A549 (cell line): ENCODE measurements at regions of chr15 and their contacts with region 1.

Region 1: GRCh38 chr15:40906091-40906990 is 12.1 kb downstream of the VPS18 start:
- DNase-seq: peak in 1 of 2 experiments; percentile 64
- ATAC-seq: peak; percentile 68 to 90
- H3K4me3 ChIP-seq: peak overlapping the region; percentile 41
- H3K27ac ChIP-seq: peak overlapping the region; percentile 65 to 83
- H3K4me1 ChIP-seq: peaks cover 29% of the 10 kb centered on the region
- CTCF ChIP-seq: peak; percentile 61
- EP300 ChIP-seq: no peak
- POLR2A ChIP-seq: no peak
- RAD21 ChIP-seq: peak; percentile 52 to 65

Region 2: GRCh38 chr15:40787344-40787841 is 118.9 kb before region 1 on chr15:
- CTCF ChIA-PET with region 1: no interaction called
- POLR2A ChIA-PET with region 1: no interaction called
- DNase-seq: no peak
- ATAC-seq: no peak
- H3K4me3 ChIP-seq: no peak overlapping the region
- H3K27ac ChIP-seq: peak overlapping the region; percentile 46 to 77; a peak in 4 of 6 replicates
- H3K4me1 ChIP-seq: peaks cover 36% of the 10 kb centered on the region
- CTCF ChIP-seq: no peak
- EP300 ChIP-seq: peak in 1 of 2 experiments; percentile 42; a peak in 1 of 5 replicates
- POLR2A ChIP-seq: no peak
- RAD21 ChIP-seq: no peak

Region 3: DNA sequence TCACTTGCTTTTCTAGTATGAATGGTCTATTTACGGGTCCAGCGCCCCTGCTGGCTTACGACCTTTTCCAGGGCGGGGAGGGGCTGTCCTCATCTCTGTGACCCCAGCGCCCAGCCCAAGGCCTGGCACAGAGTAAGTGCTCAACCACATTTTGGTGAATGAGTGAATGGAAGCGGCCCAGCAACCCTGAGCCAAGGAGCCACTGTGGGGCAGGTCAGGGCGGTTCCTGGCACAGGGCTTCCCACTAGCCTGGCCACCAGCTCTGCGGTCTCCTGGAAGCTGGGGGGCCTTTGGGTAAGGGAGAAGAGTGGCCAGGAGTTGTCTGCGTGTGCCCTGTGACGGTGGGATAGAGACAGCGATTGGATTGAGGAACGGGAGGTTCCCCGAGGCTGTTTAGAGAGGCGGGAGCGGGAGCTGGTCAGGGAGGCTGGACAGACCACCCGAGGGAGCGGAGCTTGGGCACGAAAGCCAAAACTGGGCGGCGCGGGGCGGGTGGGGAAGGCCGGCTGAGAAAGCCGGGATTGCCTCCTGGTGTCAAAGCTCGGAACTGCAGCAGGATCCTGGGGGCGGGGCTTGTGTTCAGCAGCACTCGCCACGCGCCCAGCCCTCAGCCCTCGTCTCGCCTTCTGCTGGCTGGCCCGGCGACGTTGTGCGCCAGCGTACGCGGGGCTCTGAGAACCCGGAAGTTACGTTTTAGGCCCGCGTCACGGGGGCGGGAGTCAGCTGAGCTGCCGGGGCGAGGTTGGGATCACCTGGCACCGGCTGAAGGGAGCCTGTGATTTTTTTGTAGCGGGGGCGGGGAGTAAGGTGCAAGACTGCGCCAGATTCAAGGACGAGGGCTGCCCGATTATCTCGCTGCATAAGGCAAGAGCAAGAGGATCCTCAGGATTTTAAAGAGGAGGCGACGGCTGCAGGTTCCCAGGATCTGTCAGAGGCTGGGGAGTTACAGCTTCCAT is 12.3 kb before region 1 on chr15 and contains the start of gene VPS18:
- CTCF ChIA-PET with region 1: interaction called, 50 read pairs
- POLR2A ChIA-PET with region 1: no interaction called
- DNase-seq: peak; percentile 72 to 95
- ATAC-seq: peak; percentile 95 to 96
- H3K4me3 ChIP-seq: peak within 1 kb of the TSS; percentile 79
- H3K27ac ChIP-seq: peak within 1 kb of the TSS; percentile 88 to 91
- H3K4me1 ChIP-seq: peaks cover 12% of the 10 kb centered on the region
- CTCF ChIP-seq: peak; percentile 68
- EP300 ChIP-seq: no peak
- POLR2A ChIP-seq: peak; percentile 47
- RAD21 ChIP-seq: peak; percentile 75 to 92
- polyA plus RNA-seq, gene VPS18: 9.0 and 10.7 TPM in 2 replicates

Region 4: DNA sequence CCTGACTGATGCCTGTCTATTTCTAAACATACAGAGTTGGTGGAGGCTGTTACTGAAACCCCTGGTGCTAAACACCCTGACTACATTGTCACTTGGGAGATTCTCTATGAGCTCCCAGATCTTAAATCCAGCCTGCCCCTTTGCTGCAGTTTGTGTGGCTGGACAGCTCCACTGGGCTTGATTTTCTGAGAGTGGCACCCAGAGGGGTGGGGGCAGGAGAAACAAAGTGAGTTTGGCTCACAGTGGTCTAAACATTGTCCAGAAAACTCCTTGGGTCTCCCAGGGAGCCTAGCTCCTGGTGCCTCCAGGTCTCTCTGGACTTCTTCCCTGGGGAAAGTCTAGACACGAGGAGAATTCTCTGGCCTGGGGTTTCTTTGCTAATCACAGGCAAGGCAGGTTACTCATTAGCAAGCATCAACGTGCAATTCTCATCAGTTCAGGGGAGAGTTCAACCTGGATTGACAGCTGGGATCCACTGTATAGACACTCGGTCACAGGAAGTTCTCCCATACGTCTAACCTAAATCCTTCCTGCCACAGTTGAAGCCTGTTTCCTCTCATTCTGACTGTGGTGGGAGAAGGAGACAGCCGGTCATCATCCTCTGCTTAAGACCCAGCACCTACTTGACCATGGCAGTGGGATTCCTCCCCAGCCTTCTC is 15.7 kb after region 1 on chr15:
- CTCF ChIA-PET with region 1: interaction called, 44 read pairs
- POLR2A ChIA-PET with region 1: no interaction called
- DNase-seq: no peak
- ATAC-seq: no peak
- H3K4me3 ChIP-seq: no peak overlapping the region
- H3K27ac ChIP-seq: no peak overlapping the region
- H3K4me1 ChIP-seq: no peaks in the 10 kb centered on the region
- CTCF ChIP-seq: no peak
- EP300 ChIP-seq: no peak
- POLR2A ChIP-seq: no peak
- RAD21 ChIP-seq: no peak

Region 5: DNA sequence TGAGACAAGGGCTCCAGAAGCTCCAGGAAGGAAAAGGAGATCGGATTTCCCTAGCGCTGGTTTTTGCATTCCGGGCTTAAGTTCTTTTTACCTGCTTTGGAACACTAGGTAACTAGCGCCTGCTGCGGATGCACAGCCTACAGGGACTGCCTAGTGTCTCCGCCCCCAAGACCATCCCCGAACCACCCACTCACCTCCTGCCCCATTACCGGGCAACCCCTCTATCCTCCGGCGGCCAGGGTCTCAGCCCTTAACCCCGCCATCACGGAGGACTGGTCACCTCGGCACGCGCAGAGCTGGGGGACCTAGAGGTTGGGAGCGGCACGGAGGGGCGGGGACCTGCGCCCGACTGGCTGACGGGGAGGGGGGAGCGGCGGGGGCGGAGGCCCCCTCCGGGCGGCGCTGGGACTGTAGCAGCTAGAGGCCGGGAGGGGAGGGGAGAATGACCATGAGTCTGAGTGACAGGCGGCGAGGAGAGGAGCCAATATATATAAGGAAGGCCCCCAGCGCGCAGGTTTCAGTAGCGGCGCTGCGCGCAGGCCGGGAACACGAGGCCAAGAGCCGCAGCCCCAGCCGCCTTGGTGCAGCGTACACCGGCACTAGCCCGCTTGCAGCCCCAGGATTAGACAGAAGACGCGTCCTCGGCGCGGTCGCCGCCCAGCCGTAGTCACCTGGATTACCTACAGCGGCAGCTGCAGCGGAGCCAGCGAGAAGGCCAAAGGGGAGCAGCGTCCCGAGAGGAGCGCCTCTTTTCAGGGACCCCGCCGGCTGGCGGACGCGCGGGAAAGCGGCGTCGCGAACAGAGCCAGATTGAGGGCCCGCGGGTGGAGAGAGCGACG is 22.7 kb after region 1 on chr15 and contains the start of gene DLL4:
- CTCF ChIA-PET with region 1: interaction called, 51 read pairs
- POLR2A ChIA-PET with region 1: interaction called, 4 read pairs
- DNase-seq: peak; percentile 57 to 73
- ATAC-seq: peak; percentile 54 to 74
- H3K4me3 ChIP-seq: peak within 1 kb of the TSS; percentile 48
- H3K27ac ChIP-seq: peak within 1 kb of the TSS in 1 of 2 experiments; percentile 63; a peak in 3 of 6 replicates
- H3K4me1 ChIP-seq: peaks cover 24% of the 10 kb centered on the region; the same call in 1 of the 3 replicates
- CTCF ChIP-seq: no peak
- EP300 ChIP-seq: no peak
- POLR2A ChIP-seq: peak; percentile 70
- RAD21 ChIP-seq: no peak
- polyA plus RNA-seq, gene DLL4: 0.09 and 0.16 TPM in 2 replicates

Region 6: DNA sequence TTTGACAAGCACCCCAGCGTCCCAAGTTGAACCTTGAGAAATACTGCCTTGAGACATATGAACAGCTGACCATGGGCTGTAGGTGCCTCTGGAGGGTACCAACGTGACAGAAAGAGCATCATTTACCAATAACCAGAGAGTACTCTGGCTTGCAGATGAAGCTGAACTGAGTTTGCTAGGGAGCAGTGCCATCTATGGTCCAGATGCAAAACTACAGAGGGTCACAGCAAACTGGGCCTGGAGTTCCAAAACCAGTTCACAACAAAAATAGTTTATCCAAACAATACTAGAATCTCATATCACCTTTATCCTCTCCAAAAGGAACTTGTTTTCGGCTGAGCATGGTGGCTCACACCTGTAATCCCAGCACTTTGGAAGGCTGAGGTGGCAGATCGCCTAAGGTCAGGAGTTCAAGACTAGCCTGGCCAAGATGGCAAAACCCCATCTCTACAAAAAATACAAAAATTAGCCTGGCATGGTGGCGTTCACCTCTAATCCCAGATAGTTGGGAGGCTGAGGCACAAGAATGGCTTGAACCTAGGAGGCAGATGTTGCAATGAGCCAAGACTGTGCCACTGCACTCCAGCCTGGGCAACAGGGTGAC is 116.2 kb after region 1 on chr15:
- CTCF ChIA-PET with region 1: interaction called, 32 read pairs
- POLR2A ChIA-PET with region 1: no interaction called
- DNase-seq: peak; percentile 31 to 51
- ATAC-seq: peak; percentile 83 to 85
- H3K4me3 ChIP-seq: no peak overlapping the region
- H3K27ac ChIP-seq: no peak overlapping the region
- H3K4me1 ChIP-seq: no peaks in the 10 kb centered on the region
- CTCF ChIP-seq: peak; percentile 57
- EP300 ChIP-seq: no peak
- POLR2A ChIP-seq: no peak
- RAD21 ChIP-seq: peak; percentile 68 to 75